PC-9 (cell line): ENCODE measurements at regions of chr6 and their contacts with region 1.

Region 1: DNA sequence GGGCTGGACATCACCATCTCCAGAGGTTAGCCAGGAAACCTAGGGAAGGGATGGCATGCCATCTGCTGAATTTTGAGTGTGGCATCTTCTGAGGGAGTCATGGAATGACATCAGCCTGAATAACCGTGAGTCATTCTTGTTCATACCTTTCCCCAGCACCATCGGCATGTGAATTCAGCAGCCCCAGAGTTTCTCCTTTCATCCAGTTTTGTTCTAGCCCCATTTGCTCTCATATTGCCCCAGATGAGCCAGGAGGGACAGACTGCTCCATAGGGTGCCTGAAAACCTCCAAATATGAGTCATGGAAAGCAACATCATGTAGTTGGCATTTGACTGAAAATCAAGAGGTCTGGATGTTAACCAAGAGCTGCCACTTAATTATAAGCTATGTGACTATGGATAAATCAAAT is 219.2 kb upstream of the SGK1 start:
- DNase-seq: peak; percentile 66 to 96
- H3K4me3 ChIP-seq: no peak overlapping the region
- H3K27ac ChIP-seq: peak overlapping the region; percentile 72
- H3K4me1 ChIP-seq: peaks cover 23% of the 10 kb centered on the region
- H3K27me3 ChIP-seq: no peaks in the 10 kb centered on the region
- CTCF ChIP-seq: no peak

Region 2: DNA sequence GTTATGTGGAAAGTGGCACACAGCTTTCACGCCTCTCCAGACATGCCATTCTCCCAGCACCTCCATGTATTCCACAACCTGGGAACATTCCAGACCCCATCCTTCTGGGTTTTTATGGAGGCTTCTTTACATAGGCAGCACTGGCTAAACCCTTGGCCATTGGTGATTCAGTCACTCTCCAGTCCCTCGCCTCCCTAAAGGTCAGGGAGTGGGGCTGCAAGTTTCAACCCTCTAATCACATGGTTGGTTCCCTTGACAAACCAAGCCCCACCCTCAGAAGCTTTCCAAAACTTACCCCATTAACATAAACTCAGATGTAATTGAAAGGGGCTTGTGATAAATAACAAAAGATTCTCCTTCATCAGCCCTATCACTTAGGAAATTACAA is 458.6 kb before region 1 on chr6:
- CTCF ChIA-PET with region 1: interaction called, 10 read pairs
- POLR2A ChIA-PET with region 1: no interaction called
- intact Hi-C with region 1: no loop called
- DNase-seq: no peak
- H3K4me3 ChIP-seq: no peak overlapping the region
- H3K27ac ChIP-seq: no peak overlapping the region
- H3K4me1 ChIP-seq: peaks cover 32% of the 10 kb centered on the region
- H3K27me3 ChIP-seq: no peaks in the 10 kb centered on the region
- CTCF ChIP-seq: no peak

Region 3: GRCh38 chr6:134295953-134296553 is 241.1 kb before region 1 on chr6:
- CTCF ChIA-PET with region 1: no interaction called
- POLR2A ChIA-PET with region 1: no interaction called
- intact Hi-C with region 1: loop called (anchors 5 kb)
- DNase-seq: peak; percentile 63 to 99
- H3K4me3 ChIP-seq: no peak overlapping the region
- H3K27ac ChIP-seq: peak overlapping the region; percentile 70
- H3K4me1 ChIP-seq: peaks cover 30% of the 10 kb centered on the region
- H3K27me3 ChIP-seq: no peaks in the 10 kb centered on the region
- CTCF ChIP-seq: no peak

Region 4: DNA sequence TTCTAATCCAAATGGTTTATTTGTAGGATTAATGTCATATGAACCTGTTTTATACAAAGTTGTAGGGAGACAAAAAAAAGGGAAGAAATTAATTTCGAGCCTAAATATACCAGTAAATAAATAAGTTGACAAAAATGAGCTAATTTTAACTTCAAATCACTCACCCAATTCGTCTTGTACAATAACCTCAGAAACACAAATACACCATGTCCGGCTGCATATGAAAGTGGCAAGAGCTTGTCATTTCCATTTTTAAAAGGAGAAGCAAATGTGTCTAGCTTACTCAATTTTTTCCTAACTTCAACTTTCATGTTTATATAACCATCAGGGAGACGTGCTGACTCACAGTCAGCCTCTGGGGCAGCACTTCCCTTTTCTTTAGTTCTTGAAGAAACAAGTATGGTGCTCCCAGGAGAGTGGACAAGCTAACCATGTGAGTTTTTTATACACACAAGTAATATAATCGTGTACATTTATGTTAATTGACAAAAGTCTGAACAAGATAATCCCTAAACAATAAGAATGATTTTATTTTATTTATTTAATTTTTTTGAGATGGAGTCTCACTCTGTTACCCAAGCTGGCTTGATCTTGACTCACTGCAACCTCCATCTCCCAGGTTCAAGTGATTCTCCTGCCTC is 163.7 kb before region 1 on chr6:
- CTCF ChIA-PET with region 1: no interaction called
- POLR2A ChIA-PET with region 1: no interaction called
- intact Hi-C with region 1: loop called (anchors 10 kb)
- DNase-seq: peak in 1 of 2 experiments; percentile 39
- H3K4me3 ChIP-seq: no peak overlapping the region
- H3K27ac ChIP-seq: peak overlapping the region; percentile 14
- H3K4me1 ChIP-seq: peaks cover 14% of the 10 kb centered on the region
- H3K27me3 ChIP-seq: no peaks in the 10 kb centered on the region
- CTCF ChIP-seq: no peak

Region 5: DNA sequence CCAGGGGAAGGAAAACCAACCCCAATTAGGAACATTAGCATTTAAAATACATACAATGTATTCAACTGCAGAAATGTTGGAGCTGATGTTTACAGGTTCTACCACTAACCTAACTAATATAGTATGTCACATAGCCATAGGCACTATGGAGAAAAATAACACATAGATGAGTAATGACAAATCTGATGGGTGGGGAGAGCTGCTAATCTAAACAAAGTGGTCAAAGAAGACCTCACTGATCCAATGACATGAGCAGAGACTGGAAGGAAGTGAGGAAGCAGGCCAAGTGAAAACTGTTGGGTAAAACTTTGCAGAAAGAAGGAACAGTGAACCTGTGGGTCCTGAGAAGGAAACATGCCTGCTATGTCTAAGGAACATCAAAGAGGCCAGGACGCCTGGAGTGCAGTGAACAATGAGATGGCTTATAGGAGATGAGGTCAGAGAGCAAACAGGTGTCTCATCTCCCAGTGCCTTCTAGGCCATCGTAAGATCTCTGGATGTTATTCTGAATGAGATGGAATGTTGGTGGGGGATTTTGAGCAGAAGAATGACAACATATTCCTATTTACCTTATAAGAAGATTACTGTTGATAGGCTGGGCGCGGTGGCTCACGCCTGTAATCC is 277.0 kb after region 1 on chr6:
- CTCF ChIA-PET with region 1: no interaction called
- POLR2A ChIA-PET with region 1: no interaction called
- intact Hi-C with region 1: no loop called
- DNase-seq: peak; percentile 18 to 94
- H3K4me3 ChIP-seq: no peak overlapping the region
- H3K27ac ChIP-seq: peak overlapping the region; percentile 42
- H3K4me1 ChIP-seq: peaks cover 26% of the 10 kb centered on the region
- H3K27me3 ChIP-seq: no peaks in the 10 kb centered on the region
- CTCF ChIP-seq: no peak